RWPE1 (cell line): ENCODE measurements at regions of chr11 and their contacts with region 1.

Region 1: GRCh38 chr11:82867495-82868082 is 32.6 kb downstream of the PRCP start:
- DNase-seq: peak; percentile 46
- H3K27ac ChIP-seq: no peak overlapping the region
- CTCF ChIP-seq: peak; percentile 80

Region 2: GRCh38 chr11:82714346-82715174 is 153.0 kb before region 1 on chr11:
- CTCF ChIA-PET with region 1: interaction called, 10 read pairs
- POLR2A ChIA-PET with region 1: no interaction called
- DNase-seq: no peak
- H3K27ac ChIP-seq: no peak overlapping the region
- CTCF ChIP-seq: no peak

Region 3: DNA sequence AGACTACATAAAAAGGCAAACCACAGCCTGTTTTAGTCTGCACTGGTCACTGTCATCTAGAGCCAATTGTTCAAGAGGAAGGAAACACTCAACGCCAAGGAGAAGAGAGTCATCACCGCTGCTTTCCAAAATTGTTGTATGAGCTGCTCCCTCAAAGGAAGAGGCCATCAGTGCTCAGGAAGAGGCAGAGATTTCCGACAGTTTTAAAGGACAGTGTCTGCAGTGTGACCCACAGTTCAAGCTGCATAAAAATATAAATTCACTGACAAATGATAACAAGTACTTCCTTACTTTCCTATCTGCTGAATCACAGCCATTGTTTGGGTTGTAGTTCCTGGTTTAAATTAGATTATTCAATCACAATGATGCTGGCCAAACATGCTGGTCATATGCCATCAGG is 16.3 kb after region 1 on chr11:
- CTCF ChIA-PET with region 1: interaction called, 12 read pairs
- POLR2A ChIA-PET with region 1: no interaction called
- DNase-seq: no peak
- H3K27ac ChIP-seq: no peak overlapping the region
- CTCF ChIP-seq: no peak

Region 4: GRCh38 chr11:83249972-83250593 is 382.5 kb after region 1 on chr11:
- CTCF ChIA-PET with region 1: interaction called, 13 read pairs
- POLR2A ChIA-PET with region 1: no interaction called
- DNase-seq: peak; percentile 58
- H3K27ac ChIP-seq: no peak overlapping the region
- CTCF ChIP-seq: peak; percentile 77